ENCODE measurements at regions of chr6 and their contacts with region 1.

Region 1: DNA sequence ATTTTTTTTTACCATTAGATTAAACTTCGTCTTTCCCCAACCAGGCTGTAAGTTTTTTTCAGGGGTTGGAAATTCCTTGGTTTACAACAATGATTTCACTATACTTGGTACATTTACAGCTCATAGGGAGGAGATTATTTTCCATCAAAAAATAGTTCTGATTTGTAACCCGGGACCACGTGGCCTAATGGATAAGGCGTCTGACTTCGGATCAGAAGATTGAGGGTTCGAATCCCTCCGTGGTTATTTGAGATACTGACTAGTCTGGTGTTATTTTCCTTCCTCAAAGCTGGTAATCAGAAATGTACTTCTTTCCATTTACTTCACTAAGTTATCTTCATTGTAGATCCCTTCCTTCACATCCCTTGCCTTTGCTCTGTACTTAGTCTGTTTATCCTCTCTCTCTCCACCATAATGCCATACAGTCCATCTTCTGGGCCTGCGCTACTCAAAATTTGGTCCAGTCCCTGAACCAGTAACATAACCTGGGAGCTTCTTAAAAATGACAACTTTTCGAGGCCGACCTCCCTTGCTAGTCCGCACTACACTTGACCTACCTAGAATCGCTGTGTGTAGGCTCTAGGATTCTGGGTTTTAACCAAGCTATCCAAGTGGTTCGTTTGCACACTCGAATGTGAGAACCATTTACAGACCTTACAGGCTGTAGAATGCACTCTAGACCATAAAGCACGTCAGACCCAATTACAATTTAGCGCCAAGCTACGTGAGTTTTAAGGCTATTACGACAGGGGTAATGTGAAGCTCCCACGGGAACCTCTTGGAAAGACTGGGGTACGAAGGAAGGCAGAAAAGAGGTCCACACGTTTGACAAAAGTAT is 42.1 kb upstream of the BTN3A2 start:
- DNase-seq: peak in 10 of 14 experiments; percentile 20 to 88 (median 52)
- ATAC-seq: peak; percentile 75
- H3K4me3 ChIP-seq: peak overlapping the region; percentile 54
- H3K4me3 Mint-ChIP-seq: peak overlapping the region; percentile 96
- H3K27ac ChIP-seq: no peak overlapping the region
- H3K27ac Mint-ChIP-seq: peak overlapping the region; percentile 93
- H3K4me1 ChIP-seq: peaks cover 23% of the 10 kb centered on the region
- H3K4me1 Mint-ChIP-seq: peaks cover 30% of the 10 kb centered on the region
- H3K27me3 ChIP-seq: no peaks in the 10 kb centered on the region
- H3K27me3 Mint-ChIP-seq: peaks cover 35% of the 10 kb centered on the region
- CTCF ChIP-seq: no peak

Region 2: DNA sequence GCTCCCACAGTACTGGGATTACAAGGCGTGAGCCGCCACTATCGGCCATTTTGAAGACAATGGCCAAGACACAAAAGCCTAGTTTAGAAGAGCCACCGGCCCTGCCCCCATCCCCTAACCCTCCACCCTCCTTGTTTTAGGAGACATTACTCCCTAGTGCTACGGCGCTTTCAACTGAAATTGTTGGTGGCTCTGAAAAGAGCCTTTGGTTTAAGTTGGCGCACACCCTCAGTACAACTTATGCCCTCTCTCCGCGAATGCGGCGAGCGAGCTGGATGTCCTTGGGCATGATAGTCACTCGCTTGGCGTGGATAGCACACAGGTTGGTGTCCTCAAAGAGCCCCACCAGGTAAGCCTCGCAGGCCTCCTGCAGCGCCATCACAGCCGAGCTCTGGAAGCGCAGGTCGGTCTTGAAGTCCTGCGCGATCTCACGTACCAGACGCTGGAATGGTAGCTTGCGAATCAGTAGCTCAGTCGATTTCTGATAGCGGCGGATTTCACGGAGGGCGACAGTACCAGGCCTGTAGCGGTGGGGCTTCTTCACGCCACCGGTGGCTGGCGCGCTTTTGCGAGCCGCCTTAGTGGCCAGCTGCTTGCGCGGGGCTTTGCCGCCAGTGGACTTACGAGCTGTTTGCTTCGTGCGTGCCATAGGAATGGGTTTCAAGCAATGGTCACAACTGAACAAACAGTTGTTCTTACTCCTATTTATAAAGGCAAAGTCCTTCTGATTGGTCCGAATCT is 72.7 kb before region 1 on chr6:
- CTCF ChIA-PET with region 1: no interaction called
- POLR2A ChIA-PET with region 1: interaction called, 18 read pairs
- intact Hi-C with region 1: no loop called
- DNase-seq: peak; percentile 64 to 93 (median 74)
- ATAC-seq: peak; percentile 78
- H3K4me3 ChIP-seq: peak overlapping the region; percentile 75
- H3K4me3 Mint-ChIP-seq: peak overlapping the region; percentile 97
- H3K27ac ChIP-seq: peak overlapping the region; percentile 72 to 80
- H3K27ac Mint-ChIP-seq: peak overlapping the region; percentile 88
- H3K4me1 ChIP-seq: peaks cover 29% of the 10 kb centered on the region
- H3K4me1 Mint-ChIP-seq: peaks cover 44% of the 10 kb centered on the region
- H3K27me3 ChIP-seq: no peaks in the 10 kb centered on the region
- H3K27me3 Mint-ChIP-seq: no peaks in the 10 kb centered on the region
- CTCF ChIP-seq: no peak

Region 3: GRCh38 chr6:26304797-26305640 is 17.8 kb before region 1 on chr6:
- CTCF ChIA-PET with region 1: interaction called, 4 read pairs
- POLR2A ChIA-PET with region 1: interaction called, 21 read pairs
- intact Hi-C with region 1: no loop called
- DNase-seq: peak in 12 of 14 experiments; percentile 48 to 90 (median 62)
- ATAC-seq: peak; percentile 73
- H3K4me3 ChIP-seq: peak overlapping the region; percentile 60
- H3K4me3 Mint-ChIP-seq: peak overlapping the region; percentile 93
- H3K27ac ChIP-seq: peak overlapping the region in 1 of 2 donors; percentile 26
- H3K27ac Mint-ChIP-seq: peak overlapping the region; percentile 93
- H3K4me1 ChIP-seq: peaks cover 5% of the 10 kb centered on the region
- H3K4me1 Mint-ChIP-seq: peaks cover 33% of the 10 kb centered on the region
- H3K27me3 ChIP-seq: no peaks in the 10 kb centered on the region
- H3K27me3 Mint-ChIP-seq: peaks cover 12% of the 10 kb centered on the region
- CTCF ChIP-seq: no peak

Measured in CD4-positive, alpha-beta T cell (primary cell).